CD4-positive, alpha-beta T cell (primary cell): ENCODE measurements at regions of chr2 and their contacts with region 1.

Region 1: GRCh38 chr2:30711646-30712085 is 95.6 kb downstream of the CAPN13 start:
- DNase-seq: peak; percentile 72 to 93 (median 81)
- ATAC-seq: peak; percentile 93
- H3K4me3 ChIP-seq: no peak overlapping the region
- H3K4me3 Mint-ChIP-seq: no peak overlapping the region
- H3K27ac ChIP-seq: no peak overlapping the region
- H3K27ac Mint-ChIP-seq: no peak overlapping the region
- H3K4me1 ChIP-seq: peaks cover 11% of the 10 kb centered on the region
- H3K4me1 Mint-ChIP-seq: peaks cover 6% of the 10 kb centered on the region
- H3K27me3 ChIP-seq: no peaks in the 10 kb centered on the region
- H3K27me3 Mint-ChIP-seq: peaks cover 5% of the 10 kb centered on the region
- CTCF ChIP-seq: peak; percentile 100

Region 2: GRCh38 chr2:30146438-30147147 is 565.1 kb before region 1 on chr2 and contains the start of gene YPEL5:
- CTCF ChIA-PET with region 1: interaction called, 13 read pairs
- POLR2A ChIA-PET with region 1: interaction called, 26 read pairs
- intact Hi-C with region 1: no loop called
- DNase-seq: peak; percentile 99 to 100 (median 99)
- ATAC-seq: peak; percentile 82
- H3K4me3 ChIP-seq: peak within 1 kb of the TSS; percentile 71
- H3K4me3 Mint-ChIP-seq: peak within 1 kb of the TSS; percentile 94
- H3K27ac ChIP-seq: peak within 1 kb of the TSS; percentile 97 to 100
- H3K27ac Mint-ChIP-seq: peak within 1 kb of the TSS; percentile 99
- H3K4me1 ChIP-seq: peaks cover 38% of the 10 kb centered on the region
- H3K4me1 Mint-ChIP-seq: peaks cover 68% of the 10 kb centered on the region
- H3K27me3 ChIP-seq: no peaks in the 10 kb centered on the region
- H3K27me3 Mint-ChIP-seq: no peaks in the 10 kb centered on the region
- CTCF ChIP-seq: no peak
- total RNA-seq, gene YPEL5: 932 to 972 TPM

Region 3: GRCh38 chr2:30336978-30337841 is 374.5 kb before region 1 on chr2:
- CTCF ChIA-PET with region 1: interaction called, 3 read pairs
- POLR2A ChIA-PET with region 1: no interaction called
- intact Hi-C with region 1: loop called in 1 of 2 experiments (anchors 10 kb)
- DNase-seq: peak in 13 of 14 experiments; percentile 21 to 84 (median 52)
- ATAC-seq: peak; percentile 77
- H3K4me3 ChIP-seq: peak overlapping the region; percentile 20
- H3K4me3 Mint-ChIP-seq: peak overlapping the region; percentile 80
- H3K27ac ChIP-seq: peak overlapping the region; percentile 54 to 68
- H3K27ac Mint-ChIP-seq: peak overlapping the region; percentile 98
- H3K4me1 ChIP-seq: peaks cover 76% of the 10 kb centered on the region
- H3K4me1 Mint-ChIP-seq: peaks cover 87% of the 10 kb centered on the region
- H3K27me3 ChIP-seq: no peaks in the 10 kb centered on the region
- H3K27me3 Mint-ChIP-seq: no peaks in the 10 kb centered on the region
- CTCF ChIP-seq: no peak

Region 4: GRCh38 chr2:30721668-30722647 is 10.3 kb after region 1 on chr2:
- CTCF ChIA-PET with region 1: interaction called, 11 read pairs
- POLR2A ChIA-PET with region 1: no interaction called
- intact Hi-C with region 1: no loop called
- DNase-seq: no peak
- ATAC-seq: no peak
- H3K4me3 ChIP-seq: no peak overlapping the region
- H3K4me3 Mint-ChIP-seq: no peak overlapping the region
- H3K27ac ChIP-seq: no peak overlapping the region
- H3K27ac Mint-ChIP-seq: no peak overlapping the region
- H3K4me1 ChIP-seq: no peaks in the 10 kb centered on the region
- H3K4me1 Mint-ChIP-seq: no peaks in the 10 kb centered on the region
- H3K27me3 ChIP-seq: peaks cover 8 to 22% of the 10 kb centered on the region in 2 experiments
- H3K27me3 Mint-ChIP-seq: peaks cover 38% of the 10 kb centered on the region
- CTCF ChIP-seq: no peak

Region 5: DNA sequence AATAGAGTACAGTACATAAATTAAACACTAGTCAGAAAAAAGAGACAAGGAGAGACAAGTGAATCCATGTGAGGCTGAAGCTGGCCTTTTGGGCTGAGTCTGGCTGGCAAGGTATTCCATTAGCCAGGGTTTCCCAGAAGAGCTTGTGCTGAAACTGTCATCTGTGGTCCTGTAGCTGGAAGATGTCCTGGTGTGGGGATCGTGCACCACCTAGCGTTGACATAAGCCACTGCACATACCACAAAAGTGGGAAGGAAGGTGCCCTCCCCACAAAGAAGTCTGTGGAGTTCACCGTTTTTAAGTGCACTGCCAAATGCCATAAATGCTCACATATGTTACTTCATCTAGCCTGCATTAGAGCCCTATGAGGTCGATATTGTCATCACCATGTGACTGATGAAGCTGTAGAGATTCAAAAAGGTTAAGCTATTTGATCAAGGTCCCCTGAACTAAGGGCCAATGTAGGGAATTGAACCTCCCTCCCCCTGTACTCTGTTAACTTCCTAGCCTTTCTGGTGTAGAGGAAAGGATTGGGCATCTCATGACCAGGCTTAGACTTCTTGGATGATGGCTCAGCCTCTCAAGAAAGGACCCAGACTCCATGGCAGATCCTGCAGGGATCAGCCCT is 458.5 kb after region 1 on chr2:
- CTCF ChIA-PET with region 1: interaction called, 5 read pairs
- POLR2A ChIA-PET with region 1: no interaction called
- intact Hi-C with region 1: loop called (anchors 2 to 5 kb)
- DNase-seq: peak in 12 of 14 experiments; percentile 9 to 73 (median 32)
- ATAC-seq: peak; percentile 54
- H3K4me3 ChIP-seq: no peak overlapping the region
- H3K4me3 Mint-ChIP-seq: no peak overlapping the region
- H3K27ac ChIP-seq: no peak overlapping the region
- H3K27ac Mint-ChIP-seq: no peak overlapping the region
- H3K4me1 ChIP-seq: no peaks in the 10 kb centered on the region
- H3K4me1 Mint-ChIP-seq: peaks cover 4% of the 10 kb centered on the region
- H3K27me3 ChIP-seq: no peaks in the 10 kb centered on the region
- H3K27me3 Mint-ChIP-seq: no peaks in the 10 kb centered on the region
- CTCF ChIP-seq: peak; percentile 73

Region 6: GRCh38 chr2:31333527-31334183 is 622.0 kb after region 1 on chr2:
- CTCF ChIA-PET with region 1: interaction called, 14 read pairs
- POLR2A ChIA-PET with region 1: interaction called, 4 read pairs
- intact Hi-C with region 1: loop called (anchors 1 kb)
- DNase-seq: peak; percentile 60 to 81 (median 68)
- ATAC-seq: peak; percentile 80
- H3K4me3 ChIP-seq: no peak overlapping the region
- H3K4me3 Mint-ChIP-seq: no peak overlapping the region
- H3K27ac ChIP-seq: no peak overlapping the region
- H3K27ac Mint-ChIP-seq: no peak overlapping the region
- H3K4me1 ChIP-seq: no peaks in the 10 kb centered on the region
- H3K4me1 Mint-ChIP-seq: peaks cover 4% of the 10 kb centered on the region
- H3K27me3 ChIP-seq: peaks cover 0 to 2% of the 10 kb centered on the region in 2 experiments
- H3K27me3 Mint-ChIP-seq: peaks cover 5% of the 10 kb centered on the region
- CTCF ChIP-seq: peak; percentile 94